ENCODE measurements at regions of chr20 and their contacts with region 1.

Region 1: GRCh38 chr20:5126512-5127203 is at the start of gene CDS2:
- DNase-seq: peak; percentile 100
- ATAC-seq: peak; percentile 93
- H3K4me3 ChIP-seq: peak within 1 kb of the TSS; percentile 97
- H3K4me1 ChIP-seq: peaks cover 8% of the 10 kb centered on the region
- CTCF ChIP-seq: peak; percentile 81
- total RNA-seq, gene CDS2: 37.9 to 59.5 (median 39.6) TPM

Region 2: GRCh38 chr20:5191829-5192569 is 65.3 kb after region 1 on chr20:
- intact Hi-C with region 1: loop called (anchors 5 kb)
- DNase-seq: peak in 1 of 3 donors; percentile 67
- ATAC-seq: peak; percentile 88
- H3K4me3 ChIP-seq: no peak overlapping the region
- H3K4me1 ChIP-seq: no peaks in the 10 kb centered on the region
- CTCF ChIP-seq: peak; percentile 40